AG04449 (cell line): ENCODE measurements at regions of chr2 and their contacts with region 1.

Region 1: DNA sequence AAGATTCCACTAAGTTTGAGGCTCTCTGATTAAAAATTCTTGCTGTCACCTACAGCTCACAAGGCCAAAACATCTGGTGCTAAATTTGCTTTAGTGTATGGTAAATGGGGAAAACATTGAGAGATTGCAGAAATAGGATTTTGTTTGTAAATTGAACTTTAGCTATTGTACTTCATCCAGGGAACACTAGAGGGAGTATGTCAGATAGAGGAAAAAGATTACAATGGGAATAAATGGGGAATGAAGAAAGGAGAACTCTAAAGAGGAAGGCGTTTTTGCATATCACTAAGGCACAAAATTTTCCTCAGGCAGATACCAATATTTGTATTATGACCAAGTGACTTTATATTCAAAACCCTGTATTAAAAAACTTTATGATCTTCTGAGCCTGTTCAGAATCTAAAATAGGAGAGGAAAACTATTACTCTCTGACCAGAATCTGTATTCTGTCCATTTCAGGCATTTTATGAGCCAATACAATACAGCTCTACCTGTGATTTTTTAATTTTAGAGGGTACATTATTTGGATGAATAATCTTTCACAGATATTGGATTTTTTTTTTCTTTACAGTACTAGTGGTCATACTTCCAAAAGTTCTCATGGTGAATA is 52.3 kb upstream of the ITGB6 start:
- DNase-seq: no peak
- H3K4me3 ChIP-seq: no peak overlapping the region
- CTCF ChIP-seq: peak; percentile 58

Region 2: GRCh38 chr2:160210599-160211138 is 41.7 kb before region 1 on chr2:
- CTCF ChIA-PET with region 1: interaction called, 28 read pairs
- POLR2A ChIA-PET with region 1: interaction called, 8 read pairs
- DNase-seq: no peak
- H3K4me3 ChIP-seq: no peak overlapping the region
- CTCF ChIP-seq: peak; percentile 79

Region 3: GRCh38 chr2:160224060-160224459 is 28.3 kb before region 1 on chr2:
- CTCF ChIA-PET with region 1: interaction called, 31 read pairs
- POLR2A ChIA-PET with region 1: interaction called, 3 read pairs
- DNase-seq: peak; percentile 88
- H3K4me3 ChIP-seq: peak overlapping the region; percentile 4; the same call in 1 of the 2 replicates
- CTCF ChIP-seq: no peak

Region 4: GRCh38 chr2:160241251-160242137 is 10.9 kb before region 1 on chr2:
- CTCF ChIA-PET with region 1: interaction called, 63 read pairs
- POLR2A ChIA-PET with region 1: no interaction called
- DNase-seq: no peak
- H3K4me3 ChIP-seq: no peak overlapping the region
- CTCF ChIP-seq: no peak